Naive thymus-derived CD8-positive, alpha-beta T cell (primary cell): ENCODE measurements at regions of chr17 and their contacts with region 1.

Region 1: DNA sequence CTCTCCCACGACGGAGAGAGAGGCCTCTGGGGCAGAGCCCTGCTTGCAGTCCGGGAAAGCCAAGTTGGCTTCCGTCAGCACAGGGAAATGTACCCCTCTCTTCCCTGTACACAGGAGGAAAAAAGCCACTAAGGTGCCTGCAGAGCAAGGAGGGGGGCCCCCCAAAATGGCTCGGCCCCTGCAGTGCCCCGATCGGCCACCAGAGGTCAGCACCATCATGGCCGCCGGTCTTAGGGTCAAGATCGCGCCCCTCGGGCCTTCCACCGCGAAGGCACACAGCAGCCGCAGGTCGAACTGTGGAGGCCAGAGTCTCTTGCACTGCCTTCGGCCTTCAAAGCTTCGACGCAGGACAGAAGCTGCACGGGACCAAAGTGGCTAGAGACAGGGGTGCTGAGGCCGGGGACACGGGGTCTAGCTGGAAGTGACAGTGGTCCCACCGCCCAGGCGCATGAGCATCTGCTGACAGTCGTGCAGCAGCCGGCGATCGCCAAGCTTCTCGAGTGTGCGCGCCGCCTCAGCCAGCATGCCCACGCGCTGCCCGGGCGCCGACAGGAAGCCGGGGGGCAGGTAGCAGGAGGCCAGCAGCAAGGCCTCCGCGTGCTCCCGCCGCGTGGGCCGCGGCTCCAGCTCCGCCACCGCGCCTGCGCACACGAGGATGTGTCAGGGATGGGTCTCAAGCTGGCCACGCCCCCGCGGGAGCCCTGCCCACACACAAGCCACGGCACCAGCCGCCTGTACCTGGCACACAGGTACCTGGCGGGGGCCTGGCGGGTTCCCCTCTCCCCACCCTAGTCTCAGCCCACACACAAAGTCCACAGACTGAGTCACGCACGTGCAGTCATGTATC is 24.4 kb downstream of the SREBF1 start:
- DNase-seq: peak; percentile 58 to 82 (median 69)
- ATAC-seq: peak; percentile 57 to 73
- H3K4me3 Mint-ChIP-seq: peak overlapping the region in 1 of 10 donors; percentile 14
- H3K27ac Mint-ChIP-seq: peak overlapping the region in 8 of 10 donors; percentile 69 to 89 (median 81)
- H3K4me1 Mint-ChIP-seq: peaks cover 11 to 33% (median 23%) of the 10 kb centered on the region in 4 donors
- H3K27me3 Mint-ChIP-seq: no peaks in the 10 kb centered on the region

Region 2: DNA sequence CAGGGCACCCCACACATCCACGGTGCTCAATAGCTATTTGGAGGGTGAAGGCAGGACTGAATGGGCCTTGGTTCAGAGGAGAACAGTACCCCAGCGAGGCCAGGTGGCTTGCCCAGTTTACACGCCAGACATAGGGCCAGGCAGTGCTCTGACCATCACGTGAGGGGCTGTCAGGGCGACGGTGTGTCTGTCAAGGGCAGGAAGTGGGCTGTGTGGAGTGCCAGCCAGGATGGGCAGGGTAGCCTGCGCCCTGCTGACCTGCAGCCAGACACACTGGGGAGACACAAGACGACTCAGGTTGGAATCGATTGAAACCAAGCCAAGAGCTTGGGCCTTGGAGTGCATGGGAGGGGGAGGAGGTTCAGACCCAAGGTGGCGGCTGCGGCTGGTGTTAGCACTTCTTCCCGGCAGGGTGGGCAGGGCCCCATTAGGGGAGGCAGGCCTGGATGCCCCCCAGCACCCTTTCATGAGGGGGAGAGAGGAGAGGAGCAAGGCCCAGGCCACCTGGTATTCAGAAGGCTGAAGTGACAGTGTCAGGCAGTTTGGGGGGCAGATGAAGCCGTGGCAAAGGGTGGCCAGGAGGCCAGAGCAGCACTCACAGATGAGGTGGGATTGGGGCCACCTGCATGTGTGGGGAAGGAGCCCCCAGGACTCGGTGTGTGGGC is 43.9 kb before region 1 on chr17:
- POLR2A ChIA-PET with region 1: no interaction called
- DNase-seq: no peak
- ATAC-seq: no peak
- H3K4me3 Mint-ChIP-seq: no peak overlapping the region
- H3K27ac Mint-ChIP-seq: peak overlapping the region in 5 of 10 donors; percentile 49 to 95 (median 59)
- H3K4me1 Mint-ChIP-seq: peaks cover 40 to 69% (median 64%) of the 10 kb centered on the region in 4 donors
- H3K27me3 Mint-ChIP-seq: no peaks in the 10 kb centered on the region

Region 3: GRCh38 chr17:17800504-17801021 is 11.9 kb before region 1 on chr17:
- POLR2A ChIA-PET with region 1: no interaction called
- DNase-seq: no peak
- ATAC-seq: no peak
- H3K4me3 Mint-ChIP-seq: no peak overlapping the region
- H3K27ac Mint-ChIP-seq: peak overlapping the region in 1 of 10 donors; percentile 82
- H3K4me1 Mint-ChIP-seq: peaks cover 0 to 7% (median 5%) of the 10 kb centered on the region in 4 donors
- H3K27me3 Mint-ChIP-seq: no peaks in the 10 kb centered on the region

Region 4: DNA sequence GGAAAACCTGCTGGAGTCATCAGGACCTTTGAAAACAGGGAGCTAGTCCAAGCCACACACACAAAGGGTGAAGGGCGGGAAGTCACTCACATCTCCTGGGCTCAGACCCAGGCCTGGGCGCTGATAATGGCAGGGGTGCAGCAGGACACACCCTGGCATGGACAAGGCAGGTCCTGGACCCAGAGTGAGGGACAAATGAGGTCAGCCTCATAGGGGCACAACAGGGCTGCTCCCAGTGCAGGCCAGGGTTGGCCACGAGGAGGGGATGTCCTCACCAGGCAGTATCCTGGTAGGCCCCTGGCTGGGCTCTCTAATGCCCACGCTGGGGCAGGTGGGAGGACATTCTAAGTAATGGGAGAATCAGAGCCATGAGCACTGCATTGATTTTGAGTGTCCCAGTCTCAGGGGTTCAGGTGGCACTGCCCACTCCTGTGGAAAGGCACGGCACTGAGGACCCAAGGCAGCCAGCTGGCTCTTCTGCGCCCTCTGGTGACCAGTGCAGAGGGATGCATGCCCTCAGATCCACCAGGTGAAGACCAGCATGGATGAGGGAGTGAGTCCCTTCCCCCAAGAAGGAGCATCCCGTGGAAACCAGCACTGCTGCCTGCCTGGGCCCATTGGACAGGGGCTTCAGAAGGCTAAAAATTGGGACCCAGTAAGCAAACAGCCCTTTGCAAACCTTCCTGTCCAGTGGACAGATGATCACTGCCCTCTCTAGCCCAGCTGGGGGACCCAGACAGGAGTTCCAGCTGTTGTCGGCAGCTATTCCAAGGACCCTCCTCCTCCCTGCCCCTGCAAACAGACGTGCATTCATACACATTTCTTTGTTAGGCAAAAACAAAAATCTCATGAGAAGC is 47.7 kb after region 1 on chr17:
- POLR2A ChIA-PET with region 1: interaction called, 45 read pairs
- DNase-seq: peak; percentile 58 to 81 (median 70)
- ATAC-seq: peak; percentile 92 to 96
- H3K4me3 Mint-ChIP-seq: no peak overlapping the region
- H3K27ac Mint-ChIP-seq: peak overlapping the region in 6 of 10 donors; percentile 20 to 58 (median 40)
- H3K4me1 Mint-ChIP-seq: peaks cover 22 to 66% (median 44%) of the 10 kb centered on the region in 4 donors
- H3K27me3 Mint-ChIP-seq: no peaks in the 10 kb centered on the region